ENCODE measurements at regions of chr5 and their contacts with region 1.

Region 1: DNA sequence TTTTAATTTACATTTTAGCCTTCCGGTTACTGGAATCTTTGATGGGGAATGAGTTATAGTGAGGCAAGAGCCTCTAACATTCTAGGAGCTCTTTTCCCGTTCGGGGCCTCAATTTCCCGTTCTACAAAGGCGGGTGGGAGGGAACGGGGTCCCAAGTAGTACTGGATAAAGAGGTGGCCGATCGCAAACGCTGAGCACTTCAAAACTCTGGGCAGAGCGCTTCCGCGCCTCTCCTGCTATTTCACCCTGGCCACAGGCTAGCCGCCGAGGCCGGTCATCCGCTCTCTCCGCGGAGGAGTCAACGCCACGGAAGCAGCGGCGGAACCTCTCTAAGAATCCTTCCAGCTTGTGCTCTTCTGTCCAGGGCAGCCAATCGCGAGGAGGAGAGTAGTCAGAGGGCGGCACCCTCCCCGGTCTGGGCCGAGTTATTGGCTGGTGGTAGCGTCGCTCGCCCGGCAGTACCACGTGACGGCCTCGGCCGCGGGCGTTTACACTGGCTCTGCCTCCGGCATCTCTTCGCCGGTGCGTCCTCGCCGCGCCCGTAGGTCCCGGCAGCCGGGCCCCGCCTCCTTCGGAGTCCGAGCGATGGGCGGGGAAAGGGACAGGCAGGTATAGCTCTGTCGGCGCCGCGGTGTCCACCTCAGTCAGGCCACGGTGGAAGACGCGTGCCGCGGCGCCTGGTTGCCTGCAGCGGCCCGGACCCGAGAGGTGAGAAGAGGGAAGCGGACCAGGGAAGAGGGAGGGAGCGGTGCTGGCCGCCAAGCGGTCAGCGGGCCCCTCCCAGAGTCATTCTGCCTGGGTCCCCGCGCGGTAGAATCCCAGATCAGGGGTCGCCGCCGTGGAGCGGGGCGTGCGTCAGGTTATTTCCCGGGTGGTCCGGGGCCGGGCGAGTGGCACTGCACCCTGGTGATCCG is at the start of gene SLC26A2:
- DNase-seq: peak; percentile 95
- ATAC-seq: peak; percentile 97
- H3K4me3 ChIP-seq: peak within 1 kb of the TSS; percentile 54 to 85 (median 79)
- H3K4me3 Mint-ChIP-seq: peak within 1 kb of the TSS; percentile 93
- H3K27ac ChIP-seq: peak within 1 kb of the TSS; percentile 74 to 81
- H3K27ac Mint-ChIP-seq: peak within 1 kb of the TSS; percentile 96
- H3K4me1 ChIP-seq: peaks cover 20% of the 10 kb centered on the region in 2 donors
- H3K4me1 Mint-ChIP-seq: peaks cover 29% of the 10 kb centered on the region
- H3K27me3 ChIP-seq: no peaks in the 10 kb centered on the region
- H3K27me3 Mint-ChIP-seq: no peaks in the 10 kb centered on the region
- CTCF ChIP-seq: no peak
- total RNA-seq, gene SLC26A2: 13.2 and 13.5 TPM in 2 replicates

Region 2: DNA sequence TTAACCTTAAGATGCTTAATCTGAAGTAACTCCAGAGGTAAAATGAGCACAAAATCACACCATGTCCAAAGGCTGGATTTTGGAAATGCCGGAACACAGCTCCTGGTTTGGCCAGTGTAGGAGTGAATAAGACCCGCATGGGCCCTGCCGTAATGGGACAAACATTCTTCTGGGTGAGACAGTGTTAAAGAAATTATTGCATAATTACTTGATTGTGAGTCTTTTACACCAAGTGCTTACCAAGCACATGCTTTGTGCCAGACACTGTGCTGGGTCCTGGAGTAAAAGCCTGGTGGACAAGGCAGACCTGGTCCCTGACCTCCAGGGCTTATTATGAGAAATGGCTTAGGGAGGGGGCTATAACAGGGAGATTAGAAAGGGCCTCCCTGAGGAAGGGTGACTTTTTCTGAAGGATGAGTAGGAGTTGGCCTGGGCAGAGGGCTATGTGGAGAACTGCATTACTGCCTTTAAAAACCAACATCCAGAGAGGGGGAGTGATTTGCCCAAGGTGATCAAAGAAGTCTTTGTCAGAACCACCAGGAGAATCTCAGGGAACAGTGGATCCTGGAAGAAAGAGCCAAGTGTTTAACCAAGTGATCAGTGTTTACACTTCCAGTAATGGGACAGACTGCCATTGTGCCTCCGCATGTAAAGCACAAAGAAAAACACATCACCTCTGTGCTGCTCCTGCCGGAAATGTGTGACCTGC is 19.4 kb before region 1 on chr5:
- CTCF ChIA-PET with region 1: no interaction called
- POLR2A ChIA-PET with region 1: no interaction called
- intact Hi-C with region 1: no loop called
- DNase-seq: no peak
- ATAC-seq: no peak
- H3K4me3 ChIP-seq: no peak overlapping the region
- H3K4me3 Mint-ChIP-seq: no peak overlapping the region
- H3K27ac ChIP-seq: no peak overlapping the region
- H3K27ac Mint-ChIP-seq: no peak overlapping the region
- H3K4me1 ChIP-seq: no peaks in the 10 kb centered on the region
- H3K4me1 Mint-ChIP-seq: no peaks in the 10 kb centered on the region
- H3K27me3 ChIP-seq: no peaks in the 10 kb centered on the region
- H3K27me3 Mint-ChIP-seq: peaks cover 10% of the 10 kb centered on the region
- CTCF ChIP-seq: no peak

Region 3: GRCh38 chr5:151758430-151759241 is 1798.1 kb after region 1 on chr5 and contains the start of gene ATOX1:
- CTCF ChIA-PET with region 1: no interaction called
- POLR2A ChIA-PET with region 1: interaction called, 6 read pairs
- intact Hi-C with region 1: loop called (anchors 5 kb)
- DNase-seq: peak; percentile 92
- ATAC-seq: peak; percentile 100
- H3K4me3 ChIP-seq: peak within 1 kb of the TSS; percentile 62 to 94 (median 81)
- H3K4me3 Mint-ChIP-seq: peak within 1 kb of the TSS; percentile 82
- H3K27ac ChIP-seq: peak within 1 kb of the TSS; percentile 52 to 75
- H3K27ac Mint-ChIP-seq: peak within 1 kb of the TSS; percentile 74
- H3K4me1 ChIP-seq: peaks cover 22 to 29% of the 10 kb centered on the region in 2 donors
- H3K4me1 Mint-ChIP-seq: peaks cover 36% of the 10 kb centered on the region
- H3K27me3 ChIP-seq: no peaks in the 10 kb centered on the region
- H3K27me3 Mint-ChIP-seq: no peaks in the 10 kb centered on the region
- CTCF ChIP-seq: no peak
- total RNA-seq, gene ATOX1: 32.0 and 37.3 TPM in 2 replicates

Measured in B cell (primary cell).